Calu3 (cell line): ENCODE measurements at regions of chr14 and their contacts with region 1.

Region 1: GRCh38 chr14:53432378-53432802 is 279.3 kb upstream of the DDHD1 start:
- DNase-seq: peak; percentile 49
- H3K4me3 Mint-ChIP-seq: no peak overlapping the region
- H3K27ac Mint-ChIP-seq: no peak overlapping the region
- H3K4me1 Mint-ChIP-seq: no peaks in the 10 kb centered on the region
- H3K27me3 Mint-ChIP-seq: peaks cover 16% of the 10 kb centered on the region
- CTCF ChIP-seq: peak; percentile 69

Region 2: GRCh38 chr14:53325176-53325806 is 107.1 kb before region 1 on chr14:
- CTCF ChIA-PET with region 1: no interaction called
- intact Hi-C with region 1: no loop called
- DNase-seq: no peak
- H3K4me3 Mint-ChIP-seq: no peak overlapping the region
- H3K27ac Mint-ChIP-seq: no peak overlapping the region
- H3K4me1 Mint-ChIP-seq: no peaks in the 10 kb centered on the region
- H3K27me3 Mint-ChIP-seq: peaks cover 30% of the 10 kb centered on the region
- CTCF ChIP-seq: no peak

Region 3: GRCh38 chr14:54025661-54026060 is 593.3 kb after region 1 on chr14:
- CTCF ChIA-PET with region 1: no interaction called
- intact Hi-C with region 1: loop called (anchors 10 kb)
- DNase-seq: peak; percentile 44
- H3K4me3 Mint-ChIP-seq: no peak overlapping the region
- H3K27ac Mint-ChIP-seq: no peak overlapping the region
- H3K4me1 Mint-ChIP-seq: no peaks in the 10 kb centered on the region
- H3K27me3 Mint-ChIP-seq: no peaks in the 10 kb centered on the region
- CTCF ChIP-seq: peak; percentile 49